ENCODE measurements at regions of chr7 and their contacts with region 1.

Region 1: DNA sequence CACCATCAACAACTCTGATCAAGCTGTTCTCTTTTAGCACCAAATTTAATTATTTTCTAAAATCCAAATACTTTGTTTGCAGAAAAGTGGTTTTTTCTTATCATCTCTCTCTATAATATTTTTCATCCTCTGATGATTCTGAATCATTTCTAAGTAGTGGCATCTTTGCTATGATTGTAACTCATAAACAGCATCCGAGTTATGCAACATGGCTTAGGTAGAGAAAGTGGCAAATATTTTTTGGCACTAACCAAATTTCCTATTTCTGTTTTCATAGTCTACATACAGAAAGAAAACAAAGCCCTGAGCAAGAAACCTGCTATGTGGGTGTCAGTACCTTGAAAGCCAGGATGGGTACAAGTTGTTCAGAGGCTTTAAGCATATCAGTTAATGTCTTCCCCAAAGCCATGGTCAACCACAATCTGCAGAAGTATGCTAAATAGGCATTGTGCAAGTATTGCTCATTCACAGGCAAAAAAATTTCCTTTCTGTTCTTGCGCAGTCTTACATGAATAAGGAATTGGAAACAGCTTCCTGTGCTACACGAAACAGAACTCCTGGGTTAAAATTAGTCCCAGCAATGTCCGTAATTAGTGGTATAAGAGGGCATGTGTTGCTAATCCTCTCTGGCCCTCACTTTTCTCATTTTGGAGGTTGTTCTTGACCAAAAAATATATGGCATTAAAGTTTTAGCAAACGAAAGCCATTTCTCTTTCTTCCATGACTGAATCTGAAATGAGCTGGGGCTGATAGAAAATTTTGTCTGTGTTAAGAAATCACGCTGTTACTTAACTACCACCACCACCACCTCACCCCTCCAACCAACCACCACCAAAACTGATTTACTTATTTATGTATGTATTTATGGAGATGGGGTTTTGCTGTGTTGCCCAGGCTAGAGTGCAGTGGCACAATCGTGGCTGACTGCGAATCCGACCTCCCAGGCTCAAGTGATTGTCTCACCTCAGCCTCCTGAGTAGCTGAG is 325.6 kb upstream of the MAGI2 start:
- DNase-seq: no peak

Region 2: GRCh38 chr7:79749856-79750255 is 29.2 kb before region 1 on chr7:
- intact Hi-C with region 1: loop called in 1 of 2 experiments (anchors 2 kb)
- DNase-seq: no peak

Measured in posterior vena cava (tissue), 2 donors.